Activated CD4-positive, alpha-beta memory T cell treated with anti-CD3 and anti-CD28 coated beads for 36 hours (primary cell): ENCODE measurements at regions of chr7 and their contacts with region 1.

Region 1: DNA sequence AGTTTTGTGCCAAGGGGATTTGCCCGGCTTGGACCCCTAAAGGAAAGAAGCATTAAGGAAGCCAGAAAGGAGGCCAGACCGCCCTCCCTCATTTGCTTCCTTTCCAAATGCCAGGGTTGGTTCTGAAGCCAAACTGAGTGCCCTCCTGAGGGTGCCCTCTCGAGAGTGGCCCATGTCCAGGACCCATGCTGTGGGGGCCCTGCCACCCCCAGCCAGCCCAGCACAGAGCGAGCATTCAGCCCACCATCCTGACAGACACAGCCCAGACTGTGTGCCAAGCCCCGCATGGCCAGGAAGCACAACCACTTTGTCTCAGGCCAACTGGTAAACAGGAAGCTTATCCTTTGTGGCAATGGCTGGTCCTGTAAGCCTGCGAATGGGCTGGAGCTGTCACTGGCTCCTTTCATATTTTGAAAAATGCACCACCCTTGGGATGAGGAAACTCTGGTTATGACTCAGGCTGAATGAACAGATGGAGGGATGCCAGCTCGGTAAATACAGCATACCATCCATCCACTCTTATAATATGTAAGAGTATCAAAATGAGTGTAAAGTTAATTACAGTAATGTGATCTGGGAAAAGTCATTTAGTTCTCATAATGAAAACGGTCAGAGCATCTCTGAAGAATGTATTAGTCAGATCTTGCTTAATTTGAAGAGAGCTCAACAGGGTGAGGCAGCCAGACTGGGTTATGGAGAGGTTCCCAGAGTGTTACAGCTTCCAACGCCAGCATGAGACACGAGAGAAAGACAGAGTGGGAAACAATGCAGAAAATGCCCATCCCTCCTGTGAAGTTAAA is 65.0 kb downstream of the STK17A start:
- DNase-seq: peak; percentile 80
- H3K4me3 Mint-ChIP-seq: peak overlapping the region; percentile 80
- H3K27ac Mint-ChIP-seq: peak overlapping the region; percentile 99
- H3K4me1 Mint-ChIP-seq: peaks cover 93% of the 10 kb centered on the region
- H3K27me3 Mint-ChIP-seq: no peaks in the 10 kb centered on the region

Region 2: GRCh38 chr7:43516581-43517342 is 131.1 kb before region 1 on chr7:
- CTCF ChIA-PET with region 1: no interaction called
- POLR2A ChIA-PET with region 1: no interaction called
- intact Hi-C with region 1: loop called (anchors 1 kb)
- DNase-seq: peak; percentile 11
- H3K4me3 Mint-ChIP-seq: no peak overlapping the region
- H3K27ac Mint-ChIP-seq: no peak overlapping the region
- H3K4me1 Mint-ChIP-seq: peaks cover 10% of the 10 kb centered on the region
- H3K27me3 Mint-ChIP-seq: peaks cover 23% of the 10 kb centered on the region

Region 3: GRCh38 chr7:43612599-43613589 is 35.0 kb before region 1 on chr7:
- CTCF ChIA-PET with region 1: interaction called, 16 read pairs
- POLR2A ChIA-PET with region 1: interaction called, 7 read pairs
- intact Hi-C with region 1: loop called (anchors 1 kb)
- DNase-seq: peak; percentile 33
- H3K4me3 Mint-ChIP-seq: peak overlapping the region; percentile 43
- H3K27ac Mint-ChIP-seq: peak overlapping the region; percentile 83
- H3K4me1 Mint-ChIP-seq: peaks cover 58% of the 10 kb centered on the region
- H3K27me3 Mint-ChIP-seq: no peaks in the 10 kb centered on the region

Region 4: DNA sequence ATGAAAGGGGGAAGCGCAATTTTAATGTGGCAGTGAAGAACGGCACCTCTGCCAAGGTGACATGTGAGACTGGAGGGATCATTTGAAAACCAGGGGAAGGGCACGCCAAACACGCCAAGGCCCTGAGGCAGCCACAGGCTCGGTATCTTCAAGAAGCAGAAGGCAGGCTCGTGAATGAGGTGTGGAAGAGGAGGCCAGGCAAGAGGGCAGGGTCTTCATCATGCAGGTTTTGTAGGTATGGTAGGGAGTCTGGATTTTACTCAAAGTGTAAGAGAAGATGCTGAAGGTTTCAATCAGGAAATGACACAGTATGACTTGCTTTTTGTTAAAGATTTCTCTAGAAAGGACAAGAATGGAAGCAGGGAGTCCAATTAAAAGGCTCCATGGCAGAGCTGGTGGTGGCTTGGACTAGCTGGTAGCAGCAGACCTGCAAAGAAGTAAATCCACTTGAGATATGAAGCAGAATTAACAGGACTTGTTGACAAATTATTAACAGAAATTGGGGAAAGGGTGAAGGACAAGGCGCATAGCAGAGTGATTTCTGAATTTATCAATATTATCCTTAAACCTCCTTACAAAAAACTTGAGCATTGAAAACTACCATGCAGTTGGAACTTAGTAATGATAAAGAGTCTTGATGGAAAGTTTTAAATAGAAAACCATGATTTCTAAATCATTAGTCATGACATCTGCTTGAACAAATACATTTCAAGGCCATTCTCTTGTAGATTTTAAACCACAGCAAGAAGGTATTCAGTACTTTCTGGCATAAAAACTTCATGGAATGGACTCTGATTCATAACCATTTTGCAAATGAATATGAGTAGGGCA is 11.1 kb after region 1 on chr7:
- CTCF ChIA-PET with region 1: interaction called, 3 read pairs
- POLR2A ChIA-PET with region 1: interaction called, 7 read pairs
- intact Hi-C with region 1: loop called (anchors 1 kb)
- DNase-seq: peak; percentile 77
- H3K4me3 Mint-ChIP-seq: peak overlapping the region; percentile 53
- H3K27ac Mint-ChIP-seq: peak overlapping the region; percentile 98
- H3K4me1 Mint-ChIP-seq: peaks cover 67% of the 10 kb centered on the region
- H3K27me3 Mint-ChIP-seq: no peaks in the 10 kb centered on the region

Region 5: GRCh38 chr7:43674584-43675436 is 26.9 kb after region 1 on chr7:
- CTCF ChIA-PET with region 1: interaction called, 8 read pairs
- POLR2A ChIA-PET with region 1: interaction called, 26 read pairs
- intact Hi-C with region 1: loop called (anchors 1 kb)
- DNase-seq: no peak
- H3K4me3 Mint-ChIP-seq: no peak overlapping the region
- H3K27ac Mint-ChIP-seq: peak overlapping the region; percentile 52
- H3K4me1 Mint-ChIP-seq: peaks cover 80% of the 10 kb centered on the region
- H3K27me3 Mint-ChIP-seq: no peaks in the 10 kb centered on the region

Region 6: GRCh38 chr7:43750016-43750887 is 102.4 kb after region 1 on chr7:
- CTCF ChIA-PET with region 1: no interaction called
- POLR2A ChIA-PET with region 1: interaction called, 5 read pairs
- intact Hi-C with region 1: loop called (anchors 2 kb)
- DNase-seq: no peak
- H3K4me3 Mint-ChIP-seq: no peak overlapping the region
- H3K27ac Mint-ChIP-seq: no peak overlapping the region
- H3K4me1 Mint-ChIP-seq: peaks cover 15% of the 10 kb centered on the region
- H3K27me3 Mint-ChIP-seq: peaks cover 10% of the 10 kb centered on the region

Region 7: DNA sequence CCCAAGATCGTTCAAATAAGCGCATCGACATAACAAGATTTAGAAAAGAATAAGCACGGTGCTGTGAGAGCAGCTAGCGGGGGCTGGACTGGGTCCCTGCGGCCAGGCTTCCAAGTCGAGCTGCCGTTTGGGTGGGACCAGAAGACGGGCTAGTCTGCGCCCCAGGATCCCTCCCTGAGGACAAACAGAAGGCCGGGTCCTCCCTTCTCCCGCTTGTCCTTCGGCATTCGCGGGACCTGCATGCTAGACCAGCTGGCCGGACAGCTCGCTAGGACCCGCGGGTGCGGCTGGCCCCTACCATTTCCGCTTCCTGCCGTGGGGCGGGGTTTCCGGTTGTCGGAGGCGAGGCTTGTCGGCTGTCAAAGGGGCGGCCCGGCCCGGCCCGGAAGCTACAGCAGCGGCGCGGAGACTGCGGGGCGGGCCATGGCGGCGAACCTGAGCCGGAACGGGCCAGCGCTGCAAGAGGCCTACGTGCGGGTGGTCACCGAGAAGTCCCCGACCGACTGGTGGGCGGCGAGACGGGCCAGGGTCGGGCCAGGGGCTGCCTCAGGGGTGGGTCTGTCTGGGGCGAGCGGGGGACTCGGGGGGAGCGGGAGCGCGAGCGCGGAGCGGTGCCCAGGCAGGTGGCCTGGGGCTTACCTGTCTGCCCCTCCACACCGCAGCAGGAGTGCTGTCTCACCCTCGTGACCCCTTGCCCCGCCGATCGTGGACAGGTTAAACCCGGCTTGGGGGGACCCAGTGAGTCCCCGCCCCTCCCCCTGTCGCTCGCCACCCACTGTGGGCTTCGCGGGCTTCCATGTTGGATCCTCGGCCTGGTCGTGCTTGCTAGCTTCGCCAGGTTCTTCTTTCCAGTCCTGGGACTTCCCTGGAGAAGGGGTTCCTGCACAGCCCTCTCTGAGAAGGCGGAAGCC is 396.7 kb after region 1 on chr7 and contains the start of gene DBNL:
- CTCF ChIA-PET with region 1: no interaction called
- POLR2A ChIA-PET with region 1: no interaction called
- intact Hi-C with region 1: loop called (anchors 10 kb)
- DNase-seq: peak; percentile 95
- H3K4me3 Mint-ChIP-seq: peak within 1 kb of the TSS; percentile 90
- H3K27ac Mint-ChIP-seq: peak within 1 kb of the TSS; percentile 88
- H3K4me1 Mint-ChIP-seq: peaks cover 45% of the 10 kb centered on the region
- H3K27me3 Mint-ChIP-seq: no peaks in the 10 kb centered on the region
- total RNA-seq, gene DBNL: 128 to 129 TPM

Region 8: GRCh38 chr7:44087911-44088838 is 440.3 kb after region 1 on chr7:
- CTCF ChIA-PET with region 1: no interaction called
- POLR2A ChIA-PET with region 1: no interaction called
- intact Hi-C with region 1: no loop called
- DNase-seq: no peak
- H3K4me3 Mint-ChIP-seq: no peak overlapping the region
- H3K27ac Mint-ChIP-seq: no peak overlapping the region
- H3K4me1 Mint-ChIP-seq: peaks cover 2% of the 10 kb centered on the region
- H3K27me3 Mint-ChIP-seq: no peaks in the 10 kb centered on the region